PC-3 (cell line): ENCODE measurements at regions of chr3 and their contacts with region 1.

Region 1: GRCh38 chr3:119662604-119663373 is 2.4 kb upstream of the POPDC2 start:
- DNase-seq: peak; percentile 70
- ATAC-seq: peak; percentile 45
- H3K4me3 ChIP-seq: peak overlapping the region; percentile 9; the same call in 1 of the 2 replicates
- H3K27ac ChIP-seq: peak overlapping the region; percentile 91
- H3K4me1 ChIP-seq: peaks cover 52% of the 10 kb centered on the region
- H3K27me3 ChIP-seq: no peaks in the 10 kb centered on the region
- CTCF ChIP-seq: peak; percentile 30; the same call in 1 of the 2 replicates

Region 2: DNA sequence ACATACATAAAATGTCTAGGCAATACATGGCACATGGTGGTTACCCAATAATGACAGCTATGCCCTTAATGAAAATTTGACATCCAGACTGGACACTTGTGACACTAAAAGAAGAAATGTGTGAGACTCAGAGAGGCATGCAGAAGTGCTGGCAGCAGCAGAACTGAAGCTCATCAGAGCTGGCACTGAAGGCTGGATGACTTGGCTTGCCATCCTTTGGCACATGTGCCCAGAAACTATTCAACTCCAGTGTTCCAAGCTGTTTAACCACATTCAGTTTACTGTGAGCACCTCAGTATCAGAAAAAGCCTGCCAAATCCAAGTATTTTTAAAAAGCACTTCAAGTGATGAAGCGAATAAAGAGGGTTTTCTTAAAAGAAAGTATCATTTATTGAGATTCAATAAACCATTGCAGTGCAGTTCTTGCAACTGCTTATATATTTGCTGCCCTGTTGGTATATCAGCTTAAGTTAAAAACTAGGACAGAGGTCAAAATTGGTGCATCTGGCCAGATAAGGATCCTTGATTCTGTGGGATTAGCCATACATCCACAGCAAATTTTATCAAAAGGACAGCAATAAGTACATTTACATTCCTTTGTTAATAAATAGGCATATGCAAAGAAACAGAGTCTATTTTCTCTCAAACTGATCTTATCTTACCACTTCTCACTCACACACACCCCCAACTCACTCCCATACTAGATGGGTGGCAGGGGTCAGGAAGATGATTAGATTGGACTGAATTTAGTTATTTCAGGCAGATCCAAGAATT is 643.9 kb before region 1 on chr3:
- CTCF ChIA-PET with region 1: no interaction called
- POLR2A ChIA-PET with region 1: no interaction called
- intact Hi-C with region 1: no loop called
- DNase-seq: no peak
- ATAC-seq: no peak
- H3K4me3 ChIP-seq: no peak overlapping the region
- H3K27ac ChIP-seq: no peak overlapping the region
- H3K4me1 ChIP-seq: no peaks in the 10 kb centered on the region
- H3K27me3 ChIP-seq: peaks cover 65% of the 10 kb centered on the region
- CTCF ChIP-seq: no peak

Region 3: DNA sequence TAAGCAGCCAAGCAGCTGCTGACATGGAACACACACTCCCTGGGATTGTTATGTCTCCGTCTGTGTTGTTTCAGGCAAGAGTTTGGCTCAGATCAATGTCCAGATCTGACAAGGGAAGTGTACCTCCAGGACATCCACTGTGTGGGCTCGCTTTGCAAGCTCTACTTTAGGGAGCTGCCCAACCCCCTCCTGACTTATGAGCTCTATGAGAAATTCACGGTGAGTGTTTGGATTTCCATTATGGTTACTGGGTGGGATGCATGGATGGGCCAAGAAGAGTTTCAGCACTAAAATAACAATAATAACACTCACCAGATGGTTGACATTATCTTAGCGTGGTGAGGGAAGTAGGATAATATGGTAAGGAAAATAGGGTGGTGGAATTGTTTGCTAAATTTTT is 294.5 kb before region 1 on chr3:
- CTCF ChIA-PET with region 1: no interaction called
- POLR2A ChIA-PET with region 1: no interaction called
- intact Hi-C with region 1: no loop called
- DNase-seq: no peak
- ATAC-seq: no peak
- H3K4me3 ChIP-seq: no peak overlapping the region
- H3K27ac ChIP-seq: no peak overlapping the region
- H3K4me1 ChIP-seq: no peaks in the 10 kb centered on the region
- H3K27me3 ChIP-seq: no peaks in the 10 kb centered on the region
- CTCF ChIP-seq: no peak

Region 4: DNA sequence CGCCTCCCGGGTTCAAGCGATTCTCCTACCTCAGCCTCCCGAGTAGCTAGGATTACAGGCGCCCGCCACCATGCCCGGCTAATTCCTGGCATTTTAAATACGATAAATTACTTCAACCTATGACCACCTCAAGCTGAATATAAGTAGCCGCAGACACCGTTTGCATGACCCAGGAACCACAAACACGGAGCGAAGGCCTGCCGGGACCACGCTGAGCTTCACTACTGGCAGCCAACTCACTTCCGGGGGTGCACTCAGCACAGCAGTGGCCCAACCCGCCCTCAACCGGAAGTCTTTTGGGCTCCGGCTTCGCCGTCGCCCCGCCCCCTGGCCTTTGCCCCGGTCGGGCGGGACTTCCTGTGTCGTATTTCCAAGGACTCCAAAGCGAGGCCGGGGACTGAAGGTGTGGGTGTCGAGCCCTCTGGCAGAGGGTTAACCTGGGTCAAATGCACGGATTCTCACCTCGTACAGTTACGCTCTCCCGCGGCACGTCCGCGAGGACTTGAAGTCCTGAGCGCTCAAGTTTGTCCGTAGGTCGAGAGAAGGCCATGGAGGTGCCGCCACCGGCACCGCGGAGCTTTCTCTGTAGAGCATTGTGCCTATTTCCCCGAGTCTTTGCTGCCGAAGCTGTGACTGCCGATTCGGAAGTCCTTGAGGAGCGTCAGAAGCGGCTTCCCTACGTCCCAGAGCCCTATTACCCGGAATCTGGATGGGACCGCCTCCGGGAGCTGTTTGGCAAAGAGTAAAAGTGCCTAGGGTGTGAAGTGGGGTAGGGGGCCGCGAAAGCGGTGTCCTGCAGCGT is 164.4 kb before region 1 on chr3 and contains the start of gene TIMMDC1:
- CTCF ChIA-PET with region 1: no interaction called
- POLR2A ChIA-PET with region 1: interaction called, 3 read pairs
- intact Hi-C with region 1: loop called (anchors 5 kb)
- DNase-seq: peak; percentile 99
- ATAC-seq: peak; percentile 95
- H3K4me3 ChIP-seq: peak within 1 kb of the TSS; percentile 97
- H3K27ac ChIP-seq: peak within 1 kb of the TSS; percentile 74
- H3K4me1 ChIP-seq: peaks cover 29% of the 10 kb centered on the region
- H3K27me3 ChIP-seq: no peaks in the 10 kb centered on the region
- CTCF ChIP-seq: no peak
- total RNA-seq, gene TIMMDC1: 107 and 142 TPM in 2 replicates

Region 5: GRCh38 chr3:119579366-119580165 is 83.2 kb before region 1 on chr3 and contains the start of gene ADPRH:
- CTCF ChIA-PET with region 1: no interaction called
- POLR2A ChIA-PET with region 1: no interaction called
- intact Hi-C with region 1: loop called (anchors 1 kb)
- DNase-seq: peak; percentile 82
- ATAC-seq: peak; percentile 92
- H3K4me3 ChIP-seq: peak within 1 kb of the TSS; percentile 70
- H3K27ac ChIP-seq: peak within 1 kb of the TSS; percentile 43
- H3K4me1 ChIP-seq: peaks cover 15% of the 10 kb centered on the region
- H3K27me3 ChIP-seq: no peaks in the 10 kb centered on the region
- CTCF ChIP-seq: no peak
- total RNA-seq, gene ADPRH: 4.7 and 5.6 TPM in 2 replicates

Region 6: GRCh38 chr3:119618905-119619493 is 43.8 kb before region 1 on chr3:
- CTCF ChIA-PET with region 1: no interaction called
- POLR2A ChIA-PET with region 1: no interaction called
- intact Hi-C with region 1: loop called (anchors 1 kb)
- DNase-seq: peak; percentile 67
- ATAC-seq: peak; percentile 91
- H3K4me3 ChIP-seq: peak overlapping the region; percentile 7; the same call in 1 of the 2 replicates
- H3K27ac ChIP-seq: peak overlapping the region; percentile 17
- H3K4me1 ChIP-seq: peaks cover 13% of the 10 kb centered on the region
- H3K27me3 ChIP-seq: no peaks in the 10 kb centered on the region
- CTCF ChIP-seq: peak; percentile 37; the same call in 1 of the 2 replicates

Region 7: GRCh38 chr3:119628816-119629445 is 33.9 kb before region 1 on chr3:
- CTCF ChIA-PET with region 1: no interaction called
- POLR2A ChIA-PET with region 1: no interaction called
- intact Hi-C with region 1: loop called (anchors 1 kb)
- DNase-seq: peak; percentile 57
- ATAC-seq: peak; percentile 67
- H3K4me3 ChIP-seq: no peak overlapping the region
- H3K27ac ChIP-seq: peak overlapping the region; percentile 43
- H3K4me1 ChIP-seq: peaks cover 34% of the 10 kb centered on the region
- H3K27me3 ChIP-seq: no peaks in the 10 kb centered on the region
- CTCF ChIP-seq: no peak

Region 8: GRCh38 chr3:119643528-119643927 is 19.3 kb before region 1 on chr3:
- CTCF ChIA-PET with region 1: no interaction called
- POLR2A ChIA-PET with region 1: interaction called, 5 read pairs
- intact Hi-C with region 1: loop called (anchors 1 kb)
- DNase-seq: peak; percentile 95
- ATAC-seq: peak; percentile 96
- H3K4me3 ChIP-seq: peak overlapping the region; percentile 6; the same call in 1 of the 2 replicates
- H3K27ac ChIP-seq: peak overlapping the region; percentile 89
- H3K4me1 ChIP-seq: peaks cover 35% of the 10 kb centered on the region
- H3K27me3 ChIP-seq: no peaks in the 10 kb centered on the region
- CTCF ChIP-seq: no peak